ENCODE measurements at regions of chr3 and their contacts with region 1.

Region 1: GRCh38 chr3:38346587-38347410 is at the start of gene XYLB:
- DNase-seq: peak; percentile 93
- ATAC-seq: peak; percentile 91
- H3K4me3 ChIP-seq: peak within 1 kb of the TSS; percentile 82
- H3K27ac ChIP-seq: 0 out of 2 replicates have a peak within 1 kb of the TSS, but pooled peaks have one; percentile 15
- H3K4me1 ChIP-seq: peaks cover 33% of the 10 kb centered on the region
- H3K27me3 ChIP-seq: no peaks in the 10 kb centered on the region
- CTCF ChIP-seq: peak; percentile 80
- total RNA-seq, gene XYLB: 11.2 and 14.0 TPM in 2 replicates

Region 2: GRCh38 chr3:38117748-38118420 is 228.9 kb before region 1 on chr3:
- CTCF ChIA-PET with region 1: no interaction called
- POLR2A ChIA-PET with region 1: no interaction called
- intact Hi-C with region 1: loop called (anchors 5 kb)
- DNase-seq: peak; percentile 74
- ATAC-seq: peak; percentile 64
- H3K4me3 ChIP-seq: no peak overlapping the region
- H3K27ac ChIP-seq: no peak overlapping the region
- H3K4me1 ChIP-seq: peaks cover 6% of the 10 kb centered on the region; the same call in 1 of the 2 replicates
- H3K27me3 ChIP-seq: no peaks in the 10 kb centered on the region
- CTCF ChIP-seq: peak; percentile 87

Region 3: GRCh38 chr3:38327335-38328009 is 19.3 kb before region 1 on chr3:
- CTCF ChIA-PET with region 1: no interaction called
- POLR2A ChIA-PET with region 1: no interaction called
- intact Hi-C with region 1: no loop called
- DNase-seq: peak; percentile 95
- ATAC-seq: peak; percentile 92
- H3K4me3 ChIP-seq: no peak overlapping the region; the same call in 1 of the 2 replicates
- H3K27ac ChIP-seq: peak overlapping the region; percentile 88
- H3K4me1 ChIP-seq: peaks cover 9% of the 10 kb centered on the region
- H3K27me3 ChIP-seq: no peaks in the 10 kb centered on the region
- CTCF ChIP-seq: no peak

Region 4: GRCh38 chr3:38453075-38453912 is 106.5 kb after region 1 on chr3 and contains the start of gene ACVR2B:
- CTCF ChIA-PET with region 1: interaction called, 5 read pairs
- POLR2A ChIA-PET with region 1: no interaction called
- intact Hi-C with region 1: loop called (anchors 1 kb)
- DNase-seq: peak; percentile 82
- ATAC-seq: peak; percentile 42
- H3K4me3 ChIP-seq: peak within 1 kb of the TSS; percentile 82
- H3K27ac ChIP-seq: no peak within 1 kb of the TSS
- H3K4me1 ChIP-seq: peaks cover 18% of the 10 kb centered on the region; the same call in 1 of the 2 replicates
- H3K27me3 ChIP-seq: no peaks in the 10 kb centered on the region
- CTCF ChIP-seq: no peak
- total RNA-seq, gene ACVR2B: 1.5 and 1.8 TPM in 2 replicates

Region 5: GRCh38 chr3:38479431-38480092 is 132.8 kb after region 1 on chr3:
- CTCF ChIA-PET with region 1: interaction called, 8 read pairs
- POLR2A ChIA-PET with region 1: no interaction called
- intact Hi-C with region 1: loop called (anchors 2 kb)
- DNase-seq: peak; percentile 76
- ATAC-seq: peak; percentile 96
- H3K4me3 ChIP-seq: no peak overlapping the region
- H3K27ac ChIP-seq: no peak overlapping the region
- H3K4me1 ChIP-seq: no peaks in the 10 kb centered on the region
- H3K27me3 ChIP-seq: no peaks in the 10 kb centered on the region
- CTCF ChIP-seq: peak; percentile 93

Region 6: GRCh38 chr3:38662544-38662943 is 315.7 kb after region 1 on chr3:
- CTCF ChIA-PET with region 1: no interaction called
- POLR2A ChIA-PET with region 1: no interaction called
- intact Hi-C with region 1: loop called (anchors 10 kb)
- DNase-seq: peak; percentile 84
- ATAC-seq: peak; percentile 97
- H3K4me3 ChIP-seq: no peak overlapping the region
- H3K27ac ChIP-seq: no peak overlapping the region
- H3K4me1 ChIP-seq: no peaks in the 10 kb centered on the region
- H3K27me3 ChIP-seq: peaks cover 24% of the 10 kb centered on the region
- CTCF ChIP-seq: peak; percentile 91

Region 7: DNA sequence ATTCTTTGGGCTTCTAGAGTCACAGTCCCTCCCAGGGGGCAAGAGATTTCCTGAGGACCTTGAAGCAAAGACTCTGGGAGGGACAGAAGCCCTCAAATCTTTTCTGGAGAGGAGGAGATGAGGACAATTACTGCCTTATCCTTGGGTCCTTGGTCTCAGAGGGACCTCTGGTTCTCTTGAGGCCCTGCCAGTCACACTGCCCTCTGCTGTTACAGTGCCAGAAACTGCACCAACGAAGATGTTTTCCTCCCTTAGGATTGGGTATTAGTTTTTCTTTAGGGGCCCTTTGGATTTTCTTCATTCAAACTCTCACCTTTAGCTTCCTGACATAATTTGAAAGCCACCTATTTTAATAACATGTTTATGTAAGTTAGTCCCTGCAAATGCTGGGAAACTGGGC is 360.9 kb after region 1 on chr3:
- CTCF ChIA-PET with region 1: no interaction called
- POLR2A ChIA-PET with region 1: no interaction called
- intact Hi-C with region 1: no loop called
- DNase-seq: peak; percentile 8
- ATAC-seq: no peak
- H3K4me3 ChIP-seq: no peak overlapping the region
- H3K27ac ChIP-seq: no peak overlapping the region
- H3K4me1 ChIP-seq: no peaks in the 10 kb centered on the region
- H3K27me3 ChIP-seq: peaks cover 34% of the 10 kb centered on the region
- CTCF ChIP-seq: peak; percentile 61